Ovary (tissue), 10 donors: ENCODE measurements at regions of chr6 and their contacts with region 1.

Region 1: DNA sequence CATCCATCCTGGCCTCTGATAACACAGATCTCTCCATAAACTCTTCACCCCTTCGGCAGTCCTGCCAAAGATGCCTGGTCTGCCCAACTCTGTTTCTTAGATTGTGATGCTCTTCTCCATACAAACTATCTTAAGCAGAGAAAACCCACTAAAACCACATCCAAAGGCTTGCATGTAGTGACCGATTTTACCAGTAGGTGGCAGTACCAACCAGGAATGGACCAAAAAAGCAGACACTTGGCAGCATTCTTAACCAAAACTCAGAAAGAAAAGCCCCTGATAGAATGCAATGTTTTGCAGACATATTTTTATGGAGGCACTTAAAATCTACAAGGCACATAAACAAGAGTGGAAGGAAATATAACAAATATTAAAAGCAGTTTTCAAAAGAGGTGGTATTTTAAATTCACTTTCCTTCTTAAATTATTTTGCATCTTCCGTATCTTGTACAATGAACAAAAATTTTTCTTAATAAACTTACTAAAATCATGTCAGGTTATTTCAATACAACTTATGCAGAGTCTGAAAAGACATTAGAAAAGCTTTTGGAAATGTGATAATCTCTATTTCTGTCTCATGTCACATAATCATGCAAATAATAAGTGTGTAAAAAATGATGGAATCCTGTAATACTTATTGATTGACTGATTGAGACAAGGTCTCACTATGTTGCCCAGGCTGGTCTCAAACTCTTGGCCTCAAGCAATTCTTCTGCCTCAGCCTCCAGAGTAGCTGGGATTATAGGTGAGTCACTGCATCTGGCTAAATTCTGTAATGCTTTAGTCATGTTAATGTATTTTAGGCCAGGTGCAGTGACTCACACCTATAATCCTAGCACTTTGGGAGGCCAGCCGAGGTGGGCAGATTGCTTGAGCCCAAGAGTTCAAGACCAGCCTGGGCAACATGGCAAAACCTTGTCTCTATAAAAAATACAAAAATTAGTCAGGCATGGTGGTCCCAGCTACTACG is 29.4 kb downstream of the LRP11 start:
- DNase-seq: peak in 4 of 5 donors; percentile 53 to 75 (median 64)
- H3K4me3 ChIP-seq: no peak overlapping the region
- H3K27ac ChIP-seq: no peak overlapping the region
- H3K4me1 ChIP-seq: peaks cover 1% of the 10 kb centered on the region
- H3K27me3 ChIP-seq: no peaks in the 10 kb centered on the region
- CTCF ChIP-seq: peak; percentile 80 to 91 (median 84)
- EP300 ChIP-seq: no peak
- POLR2A ChIP-seq: no peak

Region 2: GRCh38 chr6:150004783-150005717 is 170.3 kb after region 1 on chr6:
- intact Hi-C with region 1: loop called in 2 of 4 experiments (anchors 10 kb)
- DNase-seq: peak; percentile 87 to 93 (median 91)
- H3K4me3 ChIP-seq: peak overlapping the region; percentile 54
- H3K27ac ChIP-seq: no peak overlapping the region
- H3K4me1 ChIP-seq: peaks cover 3% of the 10 kb centered on the region
- H3K27me3 ChIP-seq: no peaks in the 10 kb centered on the region
- CTCF ChIP-seq: no peak
- EP300 ChIP-seq: no peak
- POLR2A ChIP-seq: no peak

Region 3: DNA sequence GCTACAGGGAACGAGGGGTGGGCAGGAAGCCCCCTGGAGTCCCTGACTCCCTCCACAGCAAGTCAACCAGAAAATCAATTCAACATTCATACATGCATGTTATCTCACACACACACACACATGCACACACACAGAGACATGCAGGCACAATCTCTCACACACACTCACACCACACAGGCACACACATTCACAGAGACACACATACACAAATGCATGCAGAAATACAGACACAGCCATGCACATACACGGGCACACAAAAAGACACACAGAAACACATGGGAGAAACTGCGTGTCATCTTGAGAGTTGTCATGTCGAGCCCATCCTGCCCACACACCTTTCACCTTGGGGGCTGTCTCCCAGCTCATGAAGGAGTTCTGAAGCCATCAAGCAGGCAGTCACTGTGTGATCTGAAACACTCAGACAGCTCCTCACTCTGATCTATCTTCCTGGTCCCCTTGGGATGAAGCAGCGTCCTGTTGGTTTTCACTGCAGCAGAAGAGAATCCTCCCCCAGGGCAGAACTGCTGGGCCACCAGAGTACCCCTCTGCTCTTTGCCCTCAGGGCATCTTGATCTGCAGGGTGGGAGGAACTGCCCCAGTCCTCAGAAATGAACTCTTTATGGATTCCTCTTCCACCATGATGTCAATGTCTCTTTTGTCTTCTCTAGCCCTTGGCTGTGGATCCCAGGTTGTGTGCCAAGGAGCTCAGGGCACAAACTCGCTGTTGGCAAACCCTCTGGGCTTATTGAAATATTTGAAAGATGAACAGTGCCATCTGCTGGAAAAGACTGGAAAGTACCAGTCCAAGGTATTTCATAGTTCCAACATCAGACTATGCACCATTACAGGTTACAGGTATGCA is 181.8 kb after region 1 on chr6:
- intact Hi-C with region 1: loop called in 1 of 4 experiments (anchors 10 kb)
- DNase-seq: peak in 3 of 5 donors; percentile 39 to 46 (median 42)
- H3K4me3 ChIP-seq: no peak overlapping the region
- H3K27ac ChIP-seq: no peak overlapping the region
- H3K4me1 ChIP-seq: no peaks in the 10 kb centered on the region
- H3K27me3 ChIP-seq: no peaks in the 10 kb centered on the region
- CTCF ChIP-seq: peak; percentile 39 to 55 (median 53)
- EP300 ChIP-seq: no peak
- POLR2A ChIP-seq: no peak